Dorsolateral prefrontal cortex (tissue), 120 donors: ENCODE measurements at regions of chr7 and their contacts with region 1.

Region 1: GRCh38 chr7:88169717-88170320 is 50.0 kb downstream of the SRI start:
- DNase-seq: no peak
- H3K4me3 ChIP-seq: no peak overlapping the region
- H3K27ac ChIP-seq: peak overlapping the region in 4 of 59 donors; percentile 4 to 36 (median 12)
- H3K27me3 ChIP-seq: no peaks in the 10 kb centered on the region
- CTCF ChIP-seq: peak; percentile 56 to 89 (median 76)

Region 2: DNA sequence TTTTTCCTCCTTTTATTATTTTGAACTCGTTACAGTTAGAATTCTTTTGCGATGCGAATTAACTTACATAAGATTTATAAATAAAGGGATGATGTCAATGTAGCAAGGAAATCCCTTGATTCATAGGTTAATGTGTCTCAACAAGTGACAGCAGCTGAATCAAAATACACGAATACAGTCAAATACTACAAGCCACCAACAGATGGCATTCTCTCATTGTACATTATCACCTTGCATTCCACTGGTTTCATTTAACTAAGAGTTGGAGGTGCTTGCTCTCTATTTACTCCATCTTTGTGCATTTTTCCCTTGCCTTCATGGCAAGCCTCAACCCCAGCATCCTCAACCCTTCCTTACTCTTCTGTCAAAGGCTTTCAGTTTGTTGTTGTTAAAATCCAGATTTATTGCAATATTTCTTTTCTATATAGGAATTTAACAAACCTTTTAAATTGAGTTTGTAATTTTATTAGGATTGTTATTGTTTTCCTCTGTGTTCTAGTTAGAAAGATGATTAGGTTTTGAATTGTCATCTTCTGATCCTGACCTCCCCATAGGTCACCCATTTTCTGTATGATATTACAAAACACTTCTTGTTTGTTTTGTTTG is 371.9 kb before region 1 on chr7:
- intact Hi-C with region 1: loop called in 1 of 2 experiments (anchors 5 kb)
- DNase-seq: no peak
- H3K4me3 ChIP-seq: no peak overlapping the region
- H3K27ac ChIP-seq: no peak overlapping the region
- H3K27me3 ChIP-seq: no peaks in the 10 kb centered on the region
- CTCF ChIP-seq: peak in 55 of 56 donors; percentile 21 to 80 (median 63)

Region 3: GRCh38 chr7:87876040-87876868 is 293.6 kb before region 1 on chr7 and contains the starts of genes DBF4 and SLC25A40:
- intact Hi-C with region 1: loop called in 1 of 2 experiments (anchors 5 kb)
- DNase-seq: peak; percentile 80 to 95 (median 92)
- H3K4me3 ChIP-seq: peak within 1 kb of the TSS; percentile 60 to 97 (median 89)
- H3K27ac ChIP-seq: peak within 1 kb of the TSS; percentile 53 to 96 (median 88)
- H3K27me3 ChIP-seq: no peaks in the 10 kb centered on the region
- CTCF ChIP-seq: peak in 21 of 56 donors; percentile 0 to 46 (median 20)
- total RNA-seq, gene DBF4: 3.2 to 13.8 (median 7.3) TPM
- total RNA-seq, gene SLC25A40: 20.6 to 71.2 (median 45.1) TPM

Region 4: DNA sequence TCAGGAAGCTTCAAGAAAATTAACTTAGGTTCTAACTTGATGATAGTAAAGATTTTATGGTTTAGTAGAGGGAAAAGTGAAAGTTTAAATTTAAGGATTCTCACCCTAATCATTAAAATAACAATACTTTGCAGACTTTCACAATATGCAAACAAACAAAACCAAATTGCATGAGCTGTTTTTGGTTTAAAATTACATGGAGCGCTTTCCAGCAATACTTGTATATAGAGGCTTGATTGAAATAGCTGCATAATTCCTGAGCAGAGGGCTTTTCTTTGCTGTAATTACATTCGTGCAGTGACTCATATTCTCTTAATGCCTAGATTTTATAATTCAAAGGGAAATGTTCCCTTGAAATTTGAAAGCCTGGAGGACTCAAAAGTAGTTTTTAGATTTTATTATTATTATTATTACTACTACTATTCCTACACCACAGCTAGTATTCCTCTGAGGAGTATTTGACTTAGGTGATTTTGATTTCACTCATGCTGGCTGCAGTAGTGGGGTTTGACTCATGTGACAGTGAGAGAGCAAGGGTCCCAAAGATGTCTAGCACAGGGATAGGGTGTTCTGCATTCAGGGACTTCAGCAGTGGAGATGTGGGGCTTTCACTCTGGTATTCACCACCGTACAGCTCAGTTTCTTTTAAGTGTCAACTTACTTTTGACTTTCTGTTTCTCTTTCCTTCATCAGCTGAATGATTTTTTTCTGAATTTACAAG is 97.7 kb before region 1 on chr7:
- intact Hi-C with region 1: no loop called
- DNase-seq: no peak
- H3K4me3 ChIP-seq: peak overlapping the region in 1 of 59 donors; percentile 16
- H3K27ac ChIP-seq: no peak overlapping the region
- H3K27me3 ChIP-seq: no peaks in the 10 kb centered on the region
- CTCF ChIP-seq: no peak

Region 5: DNA sequence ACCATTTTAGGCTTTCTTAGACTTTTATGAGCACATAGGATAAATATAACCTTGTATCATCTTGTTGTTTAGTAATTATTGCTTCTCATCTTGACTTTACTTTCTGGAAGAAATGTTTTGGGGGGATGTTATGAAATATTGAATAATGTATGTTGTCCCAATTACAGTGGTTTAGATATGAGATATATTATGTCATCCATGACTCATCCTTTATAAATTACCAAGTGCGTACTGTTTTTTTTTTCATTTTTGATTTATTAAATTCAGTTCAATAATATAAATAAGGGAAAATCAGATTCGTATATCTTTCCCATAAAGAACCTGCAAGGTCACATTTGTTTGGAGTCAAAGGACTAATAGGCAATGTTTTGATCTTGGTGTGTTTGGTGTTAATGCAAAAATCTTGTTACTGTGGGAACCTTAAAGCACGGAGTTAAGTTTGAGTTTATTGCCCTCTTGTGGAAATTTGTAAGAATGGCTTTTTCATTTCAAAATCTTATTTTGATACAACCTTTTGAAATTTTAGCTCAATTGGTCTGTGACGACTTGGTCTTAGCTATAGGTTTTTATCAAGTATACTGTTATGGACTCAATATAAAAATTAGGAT is 58.6 kb before region 1 on chr7:
- intact Hi-C with region 1: loop called in 1 of 2 experiments (anchors 10 kb)
- DNase-seq: no peak
- H3K4me3 ChIP-seq: no peak overlapping the region
- H3K27ac ChIP-seq: no peak overlapping the region
- H3K27me3 ChIP-seq: no peaks in the 10 kb centered on the region
- CTCF ChIP-seq: peak; percentile 52 to 89 (median 72)